ENCODE measurements at regions of chr13 and their contacts with region 1.

Region 1: DNA sequence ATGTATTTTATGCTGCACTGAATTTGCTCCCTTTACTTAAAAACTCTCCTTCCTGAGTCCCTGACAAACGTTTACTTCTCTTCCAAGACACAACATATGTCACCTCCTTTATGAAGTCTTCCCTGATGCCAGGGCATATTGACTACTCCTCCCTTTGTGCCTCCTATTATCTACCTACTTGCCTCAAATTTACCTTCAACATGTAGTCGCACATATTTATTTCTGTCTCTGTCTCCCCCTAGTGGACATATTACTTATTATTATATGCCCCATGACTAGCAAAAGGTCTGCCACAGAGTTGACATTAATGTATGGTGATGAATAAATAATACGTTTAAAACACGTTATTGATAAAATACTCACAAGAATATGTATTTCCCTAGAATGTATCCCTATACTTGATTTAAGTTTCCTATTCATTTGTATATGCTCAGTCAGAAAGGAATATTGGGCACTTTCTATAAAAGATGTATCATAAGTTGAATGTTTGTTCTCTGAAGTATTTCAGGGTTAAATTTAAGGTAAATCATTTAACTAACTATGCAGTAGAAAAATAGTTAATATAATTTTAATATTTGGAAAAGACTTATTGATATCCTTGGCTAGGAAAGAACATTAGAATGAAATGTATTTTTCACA is 250.3 kb upstream of the ATXN8OS start:
- DNase-seq: peak; percentile 19
- ATAC-seq: peak; percentile 88
- H3K4me3 ChIP-seq: no peak overlapping the region
- H3K27ac ChIP-seq: no peak overlapping the region
- H3K4me1 ChIP-seq: no peaks in the 10 kb centered on the region
- H3K27me3 ChIP-seq: no peaks in the 10 kb centered on the region
- CTCF ChIP-seq: peak; percentile 50 to 65 (median 54); a peak in 5 of 6 replicates
- EP300 ChIP-seq: no peak
- POLR2A ChIP-seq: no peak
- RAD21 ChIP-seq: peak; percentile 88

Region 2: DNA sequence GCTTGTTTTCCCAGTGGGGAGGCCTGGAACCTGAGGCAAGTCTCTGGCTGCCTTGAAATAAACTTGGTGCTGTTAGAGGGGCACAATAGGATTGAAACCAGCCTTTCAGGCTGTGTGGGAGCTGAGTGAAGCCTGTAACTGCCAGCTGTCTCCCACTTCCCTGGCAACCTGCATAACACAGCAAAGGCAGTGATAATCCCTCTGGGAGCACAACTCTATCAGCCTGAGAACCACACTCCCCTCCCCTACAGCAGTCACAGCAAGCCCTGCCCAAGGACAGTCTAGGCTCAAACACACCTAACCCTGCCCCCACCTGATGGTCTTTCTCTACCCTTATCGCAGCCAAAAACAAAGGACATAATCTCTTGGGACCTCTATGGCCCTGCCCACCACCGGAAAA is 433.5 kb before region 1 on chr13:
- CTCF ChIA-PET with region 1: no interaction called
- POLR2A ChIA-PET with region 1: no interaction called
- RAD21 ChIA-PET with region 1: no interaction called
- SMC1A ChIA-PET with region 1: no interaction called
- in situ Hi-C with region 1: no loop called
- intact Hi-C with region 1: no loop called
- DNase-seq: no peak
- ATAC-seq: no peak
- H3K4me3 ChIP-seq: no peak overlapping the region
- H3K27ac ChIP-seq: no peak overlapping the region
- H3K4me1 ChIP-seq: no peaks in the 10 kb centered on the region
- H3K27me3 ChIP-seq: no peaks in the 10 kb centered on the region
- CTCF ChIP-seq: no peak
- EP300 ChIP-seq: no peak
- POLR2A ChIP-seq: no peak
- RAD21 ChIP-seq: no peak

Region 3: GRCh38 chr13:69545551-69545950 is 311.8 kb before region 1 on chr13:
- CTCF ChIA-PET with region 1: interaction called, 3 read pairs
- POLR2A ChIA-PET with region 1: no interaction called
- RAD21 ChIA-PET with region 1: no interaction called
- SMC1A ChIA-PET with region 1: interaction called, 3 read pairs
- in situ Hi-C with region 1: loop called (anchors 10 kb)
- intact Hi-C with region 1: no loop called
- DNase-seq: no peak
- ATAC-seq: no peak
- H3K4me3 ChIP-seq: no peak overlapping the region
- H3K27ac ChIP-seq: no peak overlapping the region
- H3K4me1 ChIP-seq: no peaks in the 10 kb centered on the region
- H3K27me3 ChIP-seq: no peaks in the 10 kb centered on the region
- CTCF ChIP-seq: no peak
- EP300 ChIP-seq: no peak
- POLR2A ChIP-seq: no peak
- RAD21 ChIP-seq: no peak

Region 4: GRCh38 chr13:69579351-69579750 is 278.0 kb before region 1 on chr13:
- CTCF ChIA-PET with region 1: interaction called, 6 read pairs
- POLR2A ChIA-PET with region 1: no interaction called
- RAD21 ChIA-PET with region 1: interaction called, 7 read pairs
- SMC1A ChIA-PET with region 1: interaction called, 6 read pairs
- in situ Hi-C with region 1: no loop called
- intact Hi-C with region 1: loop called (anchors 2 kb)
- DNase-seq: no peak
- ATAC-seq: peak; percentile 75
- H3K4me3 ChIP-seq: no peak overlapping the region
- H3K27ac ChIP-seq: no peak overlapping the region
- H3K4me1 ChIP-seq: no peaks in the 10 kb centered on the region
- H3K27me3 ChIP-seq: no peaks in the 10 kb centered on the region
- CTCF ChIP-seq: peak in 2 of 3 experiments; percentile 7 to 46; a peak in 2 of 6 replicates
- EP300 ChIP-seq: no peak
- POLR2A ChIP-seq: no peak
- RAD21 ChIP-seq: peak; percentile 64

Region 5: GRCh38 chr13:70568571-70568970 is 711.3 kb after region 1 on chr13:
- CTCF ChIA-PET with region 1: no interaction called
- POLR2A ChIA-PET with region 1: no interaction called
- RAD21 ChIA-PET with region 1: no interaction called
- SMC1A ChIA-PET with region 1: no interaction called
- in situ Hi-C with region 1: loop called (anchors 25 kb)
- intact Hi-C with region 1: loop called (anchors 5 kb)
- DNase-seq: peak; percentile 5
- ATAC-seq: peak; percentile 75
- H3K4me3 ChIP-seq: no peak overlapping the region
- H3K27ac ChIP-seq: no peak overlapping the region
- H3K4me1 ChIP-seq: no peaks in the 10 kb centered on the region
- H3K27me3 ChIP-seq: no peaks in the 10 kb centered on the region
- CTCF ChIP-seq: peak; percentile 54 to 71 (median 58); a peak in 4 of 6 replicates
- EP300 ChIP-seq: no peak
- POLR2A ChIP-seq: no peak
- RAD21 ChIP-seq: peak; percentile 82

Measured in GM12878 (cell line).